Transverse colon (tissue), 4 donors: ENCODE measurements at regions of chr11 and their contacts with region 1.

Region 1: DNA sequence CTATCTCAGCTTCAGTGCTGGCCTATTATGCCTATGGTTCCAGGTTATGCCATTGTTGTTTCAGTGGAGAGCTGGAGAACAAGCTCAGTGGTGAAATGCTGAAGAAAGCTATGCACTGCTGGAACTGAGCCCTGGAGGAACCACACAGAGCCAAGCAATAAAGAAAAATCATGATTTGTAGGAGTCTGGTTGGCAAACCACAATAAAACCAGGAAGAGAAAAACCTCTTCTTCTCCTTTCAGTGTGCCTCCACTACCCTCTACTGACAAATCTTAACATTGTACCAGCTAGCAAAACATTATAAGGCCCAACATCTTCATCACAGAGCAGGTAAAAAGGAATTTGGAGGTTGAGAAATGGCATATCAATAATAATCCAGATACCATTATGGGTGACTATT is 5.3 kb downstream of the OR51F2 start:
- DNase-seq: no peak
- H3K4me3 ChIP-seq: no peak overlapping the region
- H3K27ac ChIP-seq: no peak overlapping the region
- H3K4me1 ChIP-seq: no peaks in the 10 kb centered on the region
- H3K27me3 ChIP-seq: no peaks in the 10 kb centered on the region
- CTCF ChIP-seq: peak; percentile 27 to 51 (median 40)
- EP300 ChIP-seq: no peak
- POLR2A ChIP-seq: no peak

Region 2: GRCh38 chr11:4626207-4627099 is 200.0 kb before region 1 on chr11:
- in situ Hi-C with region 1: loop called in 1 of 4 experiments (anchors 25 kb)
- intact Hi-C with region 1: loop called (anchors 5 kb)
- DNase-seq: peak; percentile 74
- H3K4me3 ChIP-seq: no peak overlapping the region
- H3K27ac ChIP-seq: no peak overlapping the region
- H3K4me1 ChIP-seq: no peaks in the 10 kb centered on the region
- H3K27me3 ChIP-seq: no peaks in the 10 kb centered on the region
- CTCF ChIP-seq: peak; percentile 67 to 81 (median 68)
- EP300 ChIP-seq: no peak
- POLR2A ChIP-seq: no peak

Region 3: GRCh38 chr11:4636962-4637661 is 189.3 kb before region 1 on chr11 and contains the start of gene OR51D1:
- in situ Hi-C with region 1: loop called in 1 of 4 experiments (anchors 25 kb)
- intact Hi-C with region 1: loop called (anchors 5 kb)
- DNase-seq: peak; percentile 77
- H3K4me3 ChIP-seq: peak within 1 kb of the TSS in 2 of 4 donors; percentile 4 to 15
- H3K27ac ChIP-seq: no peak within 1 kb of the TSS
- H3K4me1 ChIP-seq: peaks cover 0 to 4% (median 0%) of the 10 kb centered on the region in 4 donors
- H3K27me3 ChIP-seq: peaks cover 3% of the 10 kb centered on the region
- CTCF ChIP-seq: peak; percentile 74 to 90 (median 84)
- EP300 ChIP-seq: no peak
- POLR2A ChIP-seq: no peak
- total RNA-seq, gene OR51D1: not detected